Ascending aorta (tissue), 2 donors: ENCODE measurements at regions of chr6 and their contacts with region 1.

Region 1: GRCh38 chr6:8983188-8983688 is 547.9 kb upstream of the SLC35B3 start:
- DNase-seq: peak in 1 of 2 donors; percentile 67
- H3K4me3 ChIP-seq: no peak overlapping the region
- H3K27ac ChIP-seq: no peak overlapping the region
- H3K4me1 ChIP-seq: no peaks in the 10 kb centered on the region
- H3K27me3 ChIP-seq: no peaks in the 10 kb centered on the region
- CTCF ChIP-seq: peak; percentile 22 to 89 (median 74)

Region 2: GRCh38 chr6:10434692-10435376 is 1451.6 kb after region 1 on chr6:
- intact Hi-C with region 1: loop called (anchors 5 kb)
- DNase-seq: no peak
- H3K4me3 ChIP-seq: no peak overlapping the region
- H3K27ac ChIP-seq: no peak overlapping the region
- H3K4me1 ChIP-seq: no peaks in the 10 kb centered on the region
- H3K27me3 ChIP-seq: no peaks in the 10 kb centered on the region
- CTCF ChIP-seq: peak; percentile 29 to 71 (median 48)